Dendritic cell treated with granulocyte-macrophage colony-stimulating factor and Interleukin-4, amounts not matched to agents 40 ng/mL and 50 ng/mL, for 4 days (primary cell): ENCODE measurements at regions of chr6 and their contacts with region 1.

Region 1: GRCh38 chr6:161273752-161274487 is at the start of gene AGPAT4:
- H3K4me3 Mint-ChIP-seq: peak within 1 kb of the TSS; percentile 77
- H3K27ac Mint-ChIP-seq: peak within 1 kb of the TSS; percentile 90
- H3K4me1 Mint-ChIP-seq: peaks cover 36% of the 10 kb centered on the region
- H3K27me3 Mint-ChIP-seq: peaks cover 8% of the 10 kb centered on the region

Region 2: GRCh38 chr6:161117308-161117707 is 156.6 kb before region 1 on chr6:
- intact Hi-C with region 1: loop called (anchors 2 kb)
- H3K4me3 Mint-ChIP-seq: peak overlapping the region; percentile 20
- H3K27ac Mint-ChIP-seq: peak overlapping the region; percentile 92
- H3K4me1 Mint-ChIP-seq: peaks cover 62% of the 10 kb centered on the region
- H3K27me3 Mint-ChIP-seq: no peaks in the 10 kb centered on the region

Region 3: GRCh38 chr6:161644521-161644920 is 370.6 kb after region 1 on chr6:
- intact Hi-C with region 1: no loop called
- H3K4me3 Mint-ChIP-seq: no peak overlapping the region
- H3K27ac Mint-ChIP-seq: no peak overlapping the region
- H3K4me1 Mint-ChIP-seq: no peaks in the 10 kb centered on the region
- H3K27me3 Mint-ChIP-seq: no peaks in the 10 kb centered on the region